ENCODE measurements at regions of chr11 and their contacts with region 1.

Region 1: DNA sequence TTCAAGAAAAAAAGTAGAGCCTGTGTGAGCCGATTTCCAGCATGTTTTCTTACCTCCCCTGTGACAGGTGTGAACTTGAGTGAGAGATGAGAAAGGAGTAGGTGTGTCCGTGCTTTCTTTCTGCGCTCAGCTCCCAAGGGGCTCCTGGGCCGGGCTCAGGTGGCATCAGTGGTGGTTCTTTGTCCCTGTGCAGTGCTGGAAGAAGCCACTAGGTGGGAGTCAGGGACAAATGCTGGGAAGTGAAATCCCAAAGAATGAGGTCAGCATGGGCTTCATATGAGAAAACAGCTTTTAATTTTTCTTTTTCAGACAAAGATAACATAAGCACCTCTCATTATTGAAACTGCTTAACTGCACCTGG is 57.8 kb downstream of the PPFIBP2 start:
- DNase-seq: no peak

Region 2: GRCh38 chr11:7657306-7658025 is 85.8 kb after region 1 on chr11:
- intact Hi-C with region 1: loop called (anchors 1 kb)
- DNase-seq: no peak

Region 3: DNA sequence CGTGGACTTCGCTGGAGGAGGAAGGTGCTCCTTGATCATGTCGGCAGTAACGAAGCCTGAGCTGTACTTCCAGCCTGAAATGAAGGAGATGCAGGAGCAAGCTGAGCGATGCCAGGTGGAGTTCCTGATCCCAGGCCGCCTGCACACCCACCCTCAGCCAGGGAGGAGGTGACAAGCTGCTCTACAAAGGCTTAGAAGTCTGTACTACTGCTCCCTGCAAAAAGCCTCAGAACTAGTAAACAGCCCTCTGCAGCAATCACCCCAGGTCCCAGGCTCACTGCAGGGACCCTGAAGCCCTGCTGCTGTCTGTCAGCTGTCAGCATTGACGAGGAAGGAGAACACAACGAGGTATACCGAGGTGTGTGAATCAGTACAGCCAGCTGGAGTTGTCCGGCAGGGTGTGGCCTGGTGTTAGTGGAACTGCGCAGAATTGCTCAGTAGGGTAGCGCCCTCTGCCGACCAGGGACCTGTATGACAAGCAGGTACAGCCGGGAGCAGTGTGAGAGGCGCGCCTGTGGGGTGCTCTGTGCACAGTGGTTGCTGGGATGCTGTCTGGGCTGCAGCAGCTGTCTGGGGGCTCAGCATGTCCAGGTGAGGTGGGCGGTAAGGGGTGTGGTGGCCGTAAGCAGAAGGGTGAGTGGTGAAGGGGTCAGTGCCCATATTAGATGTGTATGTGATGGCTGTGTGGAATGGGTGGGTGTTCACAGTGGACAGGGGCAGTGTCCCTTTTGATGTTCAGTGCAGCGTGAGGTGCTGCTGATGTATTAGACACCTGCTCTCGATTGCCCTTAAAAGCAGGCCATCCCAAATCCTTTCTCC is 94.1 kb after region 1 on chr11:
- intact Hi-C with region 1: loop called (anchors 2 kb)
- DNase-seq: peak; percentile 89

Measured in cardiac septum (tissue), 1 donor.